ENCODE measurements at regions of chrX and their contacts with region 1.

Region 1: DNA sequence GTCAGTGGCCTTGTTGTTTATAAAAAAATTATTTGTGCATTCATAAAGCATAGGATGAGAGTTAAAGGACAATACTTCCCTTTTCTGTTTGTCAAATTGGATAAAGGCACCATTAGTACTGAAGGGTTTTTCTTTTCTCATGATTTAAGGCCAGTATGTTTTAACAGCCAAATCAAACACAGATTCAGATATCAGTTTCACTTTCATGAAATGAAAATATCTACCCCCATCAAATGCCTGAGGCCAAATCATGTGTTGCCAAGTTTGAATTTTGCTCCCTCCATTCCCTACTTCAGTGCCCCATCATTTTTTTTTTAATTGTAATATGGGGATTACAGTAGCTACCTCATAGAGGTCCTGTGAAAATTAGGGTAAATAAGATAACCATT is 745.9 kb downstream of the RPA4 start:
- DNase-seq: no peak
- ATAC-seq: no peak
- H3K4me3 ChIP-seq: no peak overlapping the region
- H3K27ac ChIP-seq: no peak overlapping the region
- H3K4me1 ChIP-seq: no peaks in the 10 kb centered on the region
- H3K27me3 ChIP-seq: peaks cover 0 to 9% (median 0%) of the 10 kb centered on the region in 3 donors
- CTCF ChIP-seq: no peak
- POLR2A ChIP-seq: no peak

Region 2: GRCh38 chrX:96417695-96418094 is 1211.9 kb before region 1 on chrX:
- in situ Hi-C with region 1: no loop called
- intact Hi-C with region 1: no loop called
- DNase-seq: no peak
- ATAC-seq: no peak
- H3K4me3 ChIP-seq: no peak overlapping the region
- H3K27ac ChIP-seq: no peak overlapping the region
- H3K4me1 ChIP-seq: no peaks in the 10 kb centered on the region
- H3K27me3 ChIP-seq: no peaks in the 10 kb centered on the region
- CTCF ChIP-seq: no peak
- POLR2A ChIP-seq: no peak

Region 3: DNA sequence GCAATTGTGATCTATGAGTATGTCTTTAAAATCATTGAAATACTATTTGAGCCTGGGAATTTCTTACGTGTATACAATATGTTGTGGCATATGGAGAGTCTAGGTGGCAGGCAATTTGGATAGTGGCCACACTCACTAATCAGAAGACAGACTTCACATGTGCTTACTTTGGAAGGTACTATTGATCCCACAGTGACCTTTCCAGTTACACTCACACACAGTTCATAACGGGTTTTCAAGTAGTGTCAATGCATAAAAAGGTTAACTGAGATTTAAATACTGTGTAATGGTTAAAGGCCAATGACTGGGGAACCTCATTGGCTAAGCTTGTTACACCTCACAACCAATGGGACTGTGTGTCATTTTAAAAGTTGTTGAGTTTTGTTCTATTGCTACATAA is 37.3 kb after region 1 on chrX:
- in situ Hi-C with region 1: no loop called
- intact Hi-C with region 1: loop called (anchors 2 kb)
- DNase-seq: no peak
- ATAC-seq: no peak
- H3K4me3 ChIP-seq: no peak overlapping the region
- H3K27ac ChIP-seq: no peak overlapping the region
- H3K4me1 ChIP-seq: no peaks in the 10 kb centered on the region
- H3K27me3 ChIP-seq: no peaks in the 10 kb centered on the region
- CTCF ChIP-seq: no peak
- POLR2A ChIP-seq: no peak

Region 4: GRCh38 chrX:97820170-97820569 is 190.6 kb after region 1 on chrX:
- in situ Hi-C with region 1: no loop called
- intact Hi-C with region 1: no loop called
- DNase-seq: no peak
- ATAC-seq: no peak
- H3K4me3 ChIP-seq: no peak overlapping the region
- H3K27ac ChIP-seq: no peak overlapping the region
- H3K4me1 ChIP-seq: no peaks in the 10 kb centered on the region
- H3K27me3 ChIP-seq: peaks cover 0 to 3% (median 0%) of the 10 kb centered on the region in 3 donors
- CTCF ChIP-seq: no peak
- POLR2A ChIP-seq: no peak

Measured in gastrocnemius medialis (tissue), 4 donors.